ENCODE measurements at regions of chr1 and their contacts with region 1.

Region 1: GRCh38 chr1:160193091-160193819 is 2.9 kb downstream of the CASQ1 start:
- DNase-seq: peak; percentile 82 to 91 (median 91)
- H3K4me3 ChIP-seq: no peak overlapping the region
- H3K27ac ChIP-seq: no peak overlapping the region
- H3K4me1 ChIP-seq: peaks cover 1% of the 10 kb centered on the region
- H3K27me3 ChIP-seq: no peaks in the 10 kb centered on the region
- CTCF ChIP-seq: peak; percentile 91 to 98 (median 95)
- EP300 ChIP-seq: no peak
- POLR2A ChIP-seq: no peak

Region 2: GRCh38 chr1:160006312-160006940 is 186.8 kb before region 1 on chr1:
- intact Hi-C with region 1: no loop called
- DNase-seq: peak in 4 of 5 donors; percentile 33 to 63 (median 40)
- H3K4me3 ChIP-seq: no peak overlapping the region
- H3K27ac ChIP-seq: no peak overlapping the region
- H3K4me1 ChIP-seq: no peaks in the 10 kb centered on the region
- H3K27me3 ChIP-seq: no peaks in the 10 kb centered on the region
- CTCF ChIP-seq: peak in 2 of 3 donors; percentile 7 to 22
- EP300 ChIP-seq: no peak
- POLR2A ChIP-seq: no peak

Region 3: DNA sequence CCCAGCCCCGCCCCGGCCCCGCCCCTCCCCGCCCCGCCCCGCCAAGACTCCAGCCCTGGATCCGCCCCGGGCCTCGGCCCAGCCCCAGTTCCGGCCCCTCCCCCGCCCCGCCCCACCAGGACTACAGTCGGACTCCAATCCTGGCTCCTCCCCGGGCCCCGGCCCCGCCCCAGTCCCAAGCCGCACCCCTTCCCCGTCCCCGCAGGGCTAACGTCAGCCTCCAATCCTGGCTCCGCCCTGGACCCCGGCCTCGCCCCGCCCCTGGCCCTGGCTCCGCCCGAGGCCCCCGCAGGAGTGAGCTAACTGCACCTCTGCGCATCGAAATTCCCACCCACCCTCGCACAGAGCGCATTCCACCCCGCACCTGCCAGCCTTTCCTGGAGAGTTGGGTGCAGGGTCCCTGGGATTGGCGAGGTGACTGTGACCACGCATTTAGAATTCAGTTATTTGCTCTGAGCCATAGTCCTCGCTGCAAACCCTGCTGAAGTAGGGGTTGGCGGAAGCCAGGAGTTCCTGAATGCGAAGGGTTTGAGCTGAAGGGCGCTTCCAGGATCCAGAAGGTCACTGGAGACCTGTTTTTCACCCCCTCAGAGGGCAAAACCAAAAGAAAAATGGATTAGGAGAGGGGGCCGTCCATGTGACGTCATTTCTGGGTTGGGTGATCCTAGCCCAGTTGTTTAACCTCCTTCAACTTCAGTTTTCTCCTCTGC is 94.2 kb before region 1 on chr1:
- intact Hi-C with region 1: loop called in 1 of 4 experiments (anchors 10 kb)
- DNase-seq: peak; percentile 98 to 99 (median 99)
- H3K4me3 ChIP-seq: peak overlapping the region; percentile 52
- H3K27ac ChIP-seq: peak overlapping the region; percentile 67 to 79
- H3K4me1 ChIP-seq: peaks cover 17% of the 10 kb centered on the region
- H3K27me3 ChIP-seq: no peaks in the 10 kb centered on the region
- CTCF ChIP-seq: no peak
- EP300 ChIP-seq: no peak
- POLR2A ChIP-seq: peak; percentile 71

Region 4: GRCh38 chr1:160117709-160118183 is 75.5 kb before region 1 on chr1:
- intact Hi-C with region 1: loop called in 1 of 4 experiments (anchors 10 kb)
- DNase-seq: peak; percentile 57 to 84 (median 68)
- H3K4me3 ChIP-seq: no peak overlapping the region
- H3K27ac ChIP-seq: no peak overlapping the region
- H3K4me1 ChIP-seq: peaks cover 16% of the 10 kb centered on the region
- H3K27me3 ChIP-seq: no peaks in the 10 kb centered on the region
- CTCF ChIP-seq: no peak
- EP300 ChIP-seq: no peak
- POLR2A ChIP-seq: no peak

Region 5: DNA sequence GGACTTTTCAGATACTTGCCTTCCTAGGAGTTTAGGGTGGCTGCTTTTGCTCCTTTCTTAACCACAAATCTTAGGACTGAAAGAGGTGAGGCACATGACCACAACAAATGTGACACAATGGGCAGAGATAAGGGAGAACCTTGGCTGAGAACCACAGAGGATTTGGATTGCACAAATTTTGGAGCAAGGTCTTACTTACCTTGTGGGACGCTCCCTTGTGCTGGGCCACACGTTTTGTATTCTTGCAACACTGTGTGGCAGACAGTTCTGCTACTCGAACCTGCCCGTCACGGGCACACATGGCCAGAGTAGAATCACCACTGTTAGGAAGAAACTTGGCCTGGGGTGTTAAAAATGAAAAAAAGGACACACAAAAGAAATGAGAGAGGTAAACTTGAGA is 45.2 kb after region 1 on chr1:
- intact Hi-C with region 1: loop called in 1 of 4 experiments (anchors 5 kb)
- DNase-seq: no peak
- H3K4me3 ChIP-seq: no peak overlapping the region
- H3K27ac ChIP-seq: no peak overlapping the region
- H3K4me1 ChIP-seq: no peaks in the 10 kb centered on the region
- H3K27me3 ChIP-seq: no peaks in the 10 kb centered on the region
- CTCF ChIP-seq: no peak
- EP300 ChIP-seq: no peak
- POLR2A ChIP-seq: no peak

Region 6: GRCh38 chr1:160291248-160292220 is 98.3 kb after region 1 on chr1:
- intact Hi-C with region 1: loop called in 1 of 4 experiments (anchors 10 kb)
- DNase-seq: peak; percentile 33 to 63 (median 48)
- H3K4me3 ChIP-seq: no peak overlapping the region
- H3K27ac ChIP-seq: no peak overlapping the region
- H3K4me1 ChIP-seq: no peaks in the 10 kb centered on the region
- H3K27me3 ChIP-seq: no peaks in the 10 kb centered on the region
- CTCF ChIP-seq: peak; percentile 56 to 78 (median 62)
- EP300 ChIP-seq: no peak
- POLR2A ChIP-seq: no peak

Region 7: DNA sequence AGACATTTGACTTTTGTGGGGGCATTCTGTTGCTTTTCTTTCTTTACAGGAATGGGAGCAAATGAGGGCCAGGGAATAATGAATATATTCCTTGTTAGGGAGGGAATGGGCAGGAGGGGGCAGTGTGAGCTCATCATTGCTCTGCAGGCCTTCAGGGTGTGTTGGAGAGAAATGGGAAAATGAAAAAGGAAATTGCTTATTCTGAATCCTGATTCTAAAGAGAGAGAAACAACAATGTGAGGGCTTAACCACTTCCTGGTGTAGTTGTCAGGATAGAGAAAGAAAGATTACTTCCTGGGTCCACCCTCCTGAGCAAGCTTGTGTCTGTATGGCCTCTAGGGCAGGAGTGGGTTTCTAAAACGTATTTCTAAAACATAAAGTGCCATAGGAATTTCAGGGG is 235.4 kb after region 1 on chr1:
- intact Hi-C with region 1: no loop called
- DNase-seq: peak in 2 of 5 donors; percentile 44 to 60
- H3K4me3 ChIP-seq: no peak overlapping the region
- H3K27ac ChIP-seq: no peak overlapping the region
- H3K4me1 ChIP-seq: no peaks in the 10 kb centered on the region
- H3K27me3 ChIP-seq: no peaks in the 10 kb centered on the region
- CTCF ChIP-seq: peak in 1 of 3 donors; percentile 12
- EP300 ChIP-seq: no peak
- POLR2A ChIP-seq: no peak